ENCODE measurements at regions of chr1 and their contacts with region 1.

Region 1: GRCh38 chr1:958823-959729 is at the start of gene NOC2L:
- DNase-seq: peak; percentile 82
- H3K4me3 ChIP-seq: peak within 1 kb of the TSS; percentile 81 to 97 (median 85)
- H3K27ac ChIP-seq: peak within 1 kb of the TSS; percentile 14
- H3K4me1 ChIP-seq: peaks cover 5% of the 10 kb centered on the region
- H3K27me3 ChIP-seq: no peaks in the 10 kb centered on the region
- CTCF ChIP-seq: no peak
- POLR2A ChIP-seq: peak; percentile 74
- total RNA-seq, gene NOC2L: 87.9 and 88.6 TPM in 2 replicates

Region 2: GRCh38 chr1:921011-921837 is 37.9 kb before region 1 on chr1:
- CTCF ChIA-PET with region 1: no interaction called
- POLR2A ChIA-PET with region 1: no interaction called
- dilution Hi-C with region 1: no loop called
- intact Hi-C with region 1: loop called (anchors 5 kb)
- DNase-seq: peak; percentile 56
- H3K4me3 ChIP-seq: no peak overlapping the region
- H3K27ac ChIP-seq: no peak overlapping the region
- H3K4me1 ChIP-seq: no peaks in the 10 kb centered on the region
- H3K27me3 ChIP-seq: peaks cover 15 to 22% of the 10 kb centered on the region in 2 experiments
- CTCF ChIP-seq: peak; percentile 20 to 58
- POLR2A ChIP-seq: no peak

Region 3: DNA sequence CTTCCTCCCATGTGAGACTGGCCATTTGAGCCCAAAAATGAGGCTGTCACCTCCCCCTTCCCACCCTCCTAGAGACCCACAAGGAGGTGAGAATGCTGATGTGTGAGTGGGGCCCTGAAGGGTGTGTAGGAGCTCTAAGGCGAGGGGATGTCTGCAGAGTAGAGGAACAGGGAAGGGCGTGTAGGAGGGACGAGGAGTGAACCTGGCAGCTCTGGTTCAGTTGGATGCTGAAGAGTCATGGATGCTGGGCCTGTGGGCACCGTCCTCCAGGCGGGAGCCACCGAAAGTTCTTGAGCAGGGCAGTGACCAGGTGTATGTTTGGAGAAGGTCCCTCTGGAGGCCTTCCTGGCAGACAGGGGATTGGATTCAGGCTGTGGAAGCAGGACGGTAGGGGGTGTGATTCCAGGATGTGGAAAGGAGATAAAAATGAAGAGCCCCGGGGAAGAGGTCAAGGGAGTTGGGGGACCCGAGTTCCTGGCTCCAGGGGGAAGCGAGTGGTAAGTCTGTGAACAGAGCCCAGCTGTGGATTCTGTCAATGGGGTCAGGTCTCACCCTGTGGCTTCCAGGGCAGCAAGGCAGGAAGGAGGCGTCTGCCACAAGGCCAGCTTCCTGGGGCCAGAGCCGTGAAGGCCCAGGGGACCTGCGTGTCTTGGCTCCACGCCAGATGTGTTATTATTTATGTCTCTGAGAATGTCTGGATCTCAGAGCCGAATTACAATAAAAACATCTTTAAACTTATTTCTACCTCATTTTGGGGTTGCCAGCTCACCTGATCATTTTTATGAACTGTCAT is 27.5 kb before region 1 on chr1:
- CTCF ChIA-PET with region 1: no interaction called
- POLR2A ChIA-PET with region 1: no interaction called
- dilution Hi-C with region 1: no loop called
- intact Hi-C with region 1: no loop called
- DNase-seq: no peak
- H3K4me3 ChIP-seq: no peak overlapping the region
- H3K27ac ChIP-seq: no peak overlapping the region
- H3K4me1 ChIP-seq: no peaks in the 10 kb centered on the region
- H3K27me3 ChIP-seq: peaks cover 15 to 20% of the 10 kb centered on the region in 2 experiments
- CTCF ChIP-seq: no peak
- POLR2A ChIP-seq: no peak

Region 4: DNA sequence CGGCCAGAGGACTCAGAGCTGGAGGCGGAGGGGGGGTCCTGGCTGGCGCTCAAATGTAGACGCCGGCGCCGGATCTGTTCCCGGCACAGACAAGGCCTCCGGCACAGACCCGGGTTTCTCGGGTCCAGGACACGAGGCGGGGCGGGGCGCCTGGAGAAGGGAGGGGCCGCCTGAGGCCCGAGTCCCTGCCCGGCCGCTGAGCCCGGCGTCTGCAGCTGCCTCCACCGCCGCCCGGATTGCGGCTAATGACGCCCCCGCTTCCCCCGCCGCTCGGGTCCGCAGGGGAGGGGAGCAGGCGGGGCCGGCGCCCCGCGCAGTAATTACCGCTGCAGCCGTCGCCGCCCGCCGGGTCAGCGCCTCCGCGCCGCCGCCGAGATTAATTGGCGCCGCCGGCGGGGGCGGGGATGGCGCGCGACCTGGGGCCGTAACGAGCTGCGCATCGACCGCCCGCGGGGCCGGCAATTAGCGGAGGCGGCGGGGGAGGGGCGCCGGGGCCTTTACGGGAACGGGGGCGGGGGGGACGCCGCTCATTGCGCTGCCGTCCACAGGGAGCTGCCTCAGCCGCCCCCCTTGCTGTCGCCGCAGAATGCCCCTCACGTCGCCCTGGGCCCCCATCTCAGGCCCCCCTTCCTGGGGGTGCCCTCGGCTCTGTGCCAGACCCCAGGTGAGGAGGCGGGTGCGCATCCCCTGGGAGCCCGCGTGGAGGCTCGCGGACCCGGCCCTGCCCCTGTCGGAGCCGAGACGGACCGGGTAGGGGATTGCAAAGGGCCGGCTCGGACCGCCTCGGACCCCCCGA is 17.3 kb before region 1 on chr1:
- CTCF ChIA-PET with region 1: interaction called, 3 read pairs
- POLR2A ChIA-PET with region 1: no interaction called
- dilution Hi-C with region 1: no loop called
- intact Hi-C with region 1: loop called (anchors 2 kb)
- DNase-seq: peak; percentile 16
- H3K4me3 ChIP-seq: no peak overlapping the region
- H3K27ac ChIP-seq: no peak overlapping the region
- H3K4me1 ChIP-seq: peaks cover 12% of the 10 kb centered on the region
- H3K27me3 ChIP-seq: peaks cover 7 to 29% of the 10 kb centered on the region in 2 experiments
- CTCF ChIP-seq: no peak
- POLR2A ChIP-seq: no peak

Region 5: DNA sequence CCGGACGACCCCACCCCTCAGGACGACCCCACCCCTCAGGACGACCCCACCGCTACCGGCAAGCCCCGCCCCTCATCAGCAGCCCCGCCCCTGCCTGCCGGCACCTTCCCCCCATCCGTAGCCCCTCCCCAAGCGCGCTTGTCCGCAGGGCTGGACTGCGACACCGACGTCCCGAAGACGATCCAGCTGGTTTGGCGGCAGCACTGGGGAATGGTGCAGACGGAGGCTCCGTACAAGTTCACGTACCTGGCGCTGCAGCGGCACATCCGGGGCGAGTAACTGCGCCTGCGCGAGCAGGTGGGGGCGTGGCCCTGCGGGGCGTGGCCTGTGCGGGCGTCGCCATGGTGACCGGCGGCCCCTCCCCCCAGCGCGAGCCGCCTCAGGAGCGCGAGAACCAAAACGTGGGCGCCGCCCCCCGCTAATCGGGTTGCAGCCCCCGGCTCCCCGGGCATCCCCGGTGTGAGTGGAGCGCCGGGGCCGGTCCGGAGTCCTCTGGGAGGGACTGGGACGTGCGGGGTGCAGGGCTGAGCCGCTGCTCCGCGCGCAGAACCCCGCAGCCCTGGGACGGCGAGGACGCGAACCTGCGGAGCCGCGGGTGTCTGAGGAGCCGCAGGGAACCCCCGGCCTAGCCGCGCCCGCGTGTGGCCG is 110.1 kb after region 1 on chr1:
- CTCF ChIA-PET with region 1: interaction called, 3 read pairs
- POLR2A ChIA-PET with region 1: no interaction called
- dilution Hi-C with region 1: no loop called
- intact Hi-C with region 1: loop called (anchors 1 kb)
- DNase-seq: peak; percentile 40
- H3K4me3 ChIP-seq: peak overlapping the region in 2 of 3 experiments; percentile 28 to 41
- H3K27ac ChIP-seq: no peak overlapping the region
- H3K4me1 ChIP-seq: no peaks in the 10 kb centered on the region
- H3K27me3 ChIP-seq: no peaks in the 10 kb centered on the region
- CTCF ChIP-seq: no peak
- POLR2A ChIP-seq: no peak